ENCODE measurements at regions of chr1 and their contacts with region 1.

Region 1: DNA sequence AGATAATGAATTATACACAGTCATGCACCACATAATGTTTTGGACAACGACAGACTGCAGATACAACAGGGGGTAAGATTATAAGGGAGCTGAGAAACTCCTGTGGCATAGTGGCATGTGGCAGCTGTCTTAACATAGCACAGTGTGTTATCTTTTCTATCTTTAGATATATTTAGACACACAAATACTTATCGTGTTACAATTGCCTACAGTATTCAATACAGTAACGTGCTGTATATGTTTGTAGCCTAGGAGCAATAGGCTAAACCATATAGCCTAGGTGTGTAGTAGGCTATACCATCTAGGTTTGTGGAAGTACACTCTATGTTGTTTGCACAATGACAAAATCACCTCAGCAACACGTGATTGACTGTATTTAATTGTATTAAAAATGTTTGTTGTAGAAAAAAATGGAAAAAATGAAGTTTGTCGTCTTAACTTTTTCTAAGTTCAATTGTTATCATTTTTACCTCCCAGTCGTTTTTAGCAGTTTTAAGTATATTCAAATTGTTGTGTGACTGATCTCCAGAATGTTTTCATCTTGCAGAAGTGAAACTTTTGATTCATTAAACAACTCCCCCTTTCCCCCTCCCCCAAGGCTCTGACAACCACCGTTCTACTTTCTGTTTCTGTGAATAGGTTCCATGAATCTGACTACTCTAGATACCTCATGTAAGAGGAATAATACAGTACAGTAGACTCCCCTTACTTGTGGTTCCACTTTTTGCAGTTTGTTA is 351.0 kb upstream of the B3GALT2 start:
- DNase-seq: peak; percentile 91
- H3K4me3 Mint-ChIP-seq: peak overlapping the region; percentile 22
- H3K27ac Mint-ChIP-seq: peak overlapping the region; percentile 75
- H3K4me1 Mint-ChIP-seq: peaks cover 45% of the 10 kb centered on the region
- H3K27me3 Mint-ChIP-seq: no peaks in the 10 kb centered on the region

Region 2: GRCh38 chr1:192516776-192517297 is 1020.6 kb before region 1 on chr1:
- intact Hi-C with region 1: loop called (anchors 5 kb)
- DNase-seq: peak; percentile 89
- H3K4me3 Mint-ChIP-seq: peak overlapping the region; percentile 81
- H3K27ac Mint-ChIP-seq: peak overlapping the region; percentile 89
- H3K4me1 Mint-ChIP-seq: peaks cover 40% of the 10 kb centered on the region
- H3K27me3 Mint-ChIP-seq: no peaks in the 10 kb centered on the region

Region 3: DNA sequence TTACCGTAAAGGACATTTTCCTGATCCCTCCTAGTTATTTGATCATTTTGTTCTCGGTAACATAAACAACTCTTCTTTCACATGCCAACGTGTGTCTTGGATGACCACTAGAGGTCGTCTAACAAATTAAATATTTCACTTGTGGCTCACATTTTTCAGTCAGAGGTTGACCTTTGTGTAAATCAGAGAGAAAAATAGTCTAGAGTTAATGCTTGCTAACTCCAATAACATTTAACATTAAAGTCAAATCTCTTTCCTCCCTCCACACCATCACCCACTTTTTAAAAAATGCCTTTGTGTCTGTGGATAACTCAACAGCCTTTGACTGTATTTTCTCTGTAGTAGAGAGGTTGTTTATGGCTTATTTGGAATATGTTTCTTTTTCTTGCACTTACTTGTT is 130.5 kb before region 1 on chr1:
- intact Hi-C with region 1: loop called (anchors 1 kb)
- DNase-seq: peak; percentile 70
- H3K4me3 Mint-ChIP-seq: no peak overlapping the region
- H3K27ac Mint-ChIP-seq: no peak overlapping the region
- H3K4me1 Mint-ChIP-seq: peaks cover 23% of the 10 kb centered on the region
- H3K27me3 Mint-ChIP-seq: no peaks in the 10 kb centered on the region

Region 4: DNA sequence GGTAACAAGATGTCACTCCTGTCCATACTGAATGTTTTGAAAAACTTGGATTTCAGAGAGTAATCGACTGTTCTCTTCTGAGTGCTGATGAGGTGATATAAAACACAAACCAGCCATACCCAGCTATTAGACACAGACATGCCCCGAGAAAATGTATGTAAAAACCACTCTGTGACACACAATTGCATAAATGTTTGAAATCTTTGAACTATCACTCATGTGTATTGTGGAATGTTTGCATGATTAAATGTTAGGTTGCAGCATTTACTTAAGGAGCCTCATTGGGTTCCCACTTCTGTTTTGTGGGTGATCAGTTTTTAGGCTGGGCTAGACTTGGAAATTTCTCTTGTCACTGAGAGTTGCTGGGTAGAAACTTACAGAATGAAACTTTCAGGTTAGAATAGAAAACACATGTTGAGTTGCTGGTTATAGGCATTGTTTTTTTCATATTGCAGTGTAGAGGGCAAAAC is 80.6 kb before region 1 on chr1:
- intact Hi-C with region 1: loop called (anchors 5 kb)
- DNase-seq: no peak
- H3K4me3 Mint-ChIP-seq: no peak overlapping the region
- H3K27ac Mint-ChIP-seq: no peak overlapping the region
- H3K4me1 Mint-ChIP-seq: peaks cover 16% of the 10 kb centered on the region
- H3K27me3 Mint-ChIP-seq: no peaks in the 10 kb centered on the region

Region 5: GRCh38 chr1:193558491-193559028 is 21.1 kb after region 1 on chr1:
- intact Hi-C with region 1: loop called (anchors 1 kb)
- DNase-seq: no peak
- H3K4me3 Mint-ChIP-seq: no peak overlapping the region
- H3K27ac Mint-ChIP-seq: peak overlapping the region; percentile 69
- H3K4me1 Mint-ChIP-seq: peaks cover 8% of the 10 kb centered on the region
- H3K27me3 Mint-ChIP-seq: no peaks in the 10 kb centered on the region

Region 6: GRCh38 chr1:193700710-193701355 is 163.4 kb after region 1 on chr1:
- intact Hi-C with region 1: loop called (anchors 1 kb)
- DNase-seq: no peak
- H3K4me3 Mint-ChIP-seq: peak overlapping the region; percentile 4
- H3K27ac Mint-ChIP-seq: peak overlapping the region; percentile 17
- H3K4me1 Mint-ChIP-seq: peaks cover 13% of the 10 kb centered on the region
- H3K27me3 Mint-ChIP-seq: no peaks in the 10 kb centered on the region

Measured in activated CD4-positive, alpha-beta T cell treated with anti-CD3 and anti-CD28 coated beads, Interleukin-2, amount 10 ng/mL, durations not matched to agents 24 days and 14 days (primary cell).